ENCODE measurements at regions of chr20 and their contacts with region 1.

Region 1: GRCh38 chr20:32743237-32744112 is at the start of gene COMMD7:
- DNase-seq: no peak
- H3K27ac ChIP-seq: peak within 1 kb of the TSS; percentile 8
- CTCF ChIP-seq: no peak

Region 2: GRCh38 chr20:32674362-32674789 is 69.1 kb before region 1 on chr20:
- CTCF ChIA-PET with region 1: interaction called, 14 read pairs
- POLR2A ChIA-PET with region 1: no interaction called
- DNase-seq: peak; percentile 82
- H3K27ac ChIP-seq: no peak overlapping the region
- CTCF ChIP-seq: peak; percentile 84